Activated CD4-positive, alpha-beta memory T cell treated with anti-CD3 and anti-CD28 coated beads for 36 hours (primary cell): ENCODE measurements at regions of chr7 and their contacts with region 1.

Region 1: GRCh38 chr7:136030862-136031318 is 53.7 kb upstream of the MTPN start:
- DNase-seq: peak; percentile 34
- H3K4me3 Mint-ChIP-seq: no peak overlapping the region
- H3K27ac Mint-ChIP-seq: peak overlapping the region; percentile 87
- H3K4me1 Mint-ChIP-seq: peaks cover 61% of the 10 kb centered on the region
- H3K27me3 Mint-ChIP-seq: no peaks in the 10 kb centered on the region

Region 2: DNA sequence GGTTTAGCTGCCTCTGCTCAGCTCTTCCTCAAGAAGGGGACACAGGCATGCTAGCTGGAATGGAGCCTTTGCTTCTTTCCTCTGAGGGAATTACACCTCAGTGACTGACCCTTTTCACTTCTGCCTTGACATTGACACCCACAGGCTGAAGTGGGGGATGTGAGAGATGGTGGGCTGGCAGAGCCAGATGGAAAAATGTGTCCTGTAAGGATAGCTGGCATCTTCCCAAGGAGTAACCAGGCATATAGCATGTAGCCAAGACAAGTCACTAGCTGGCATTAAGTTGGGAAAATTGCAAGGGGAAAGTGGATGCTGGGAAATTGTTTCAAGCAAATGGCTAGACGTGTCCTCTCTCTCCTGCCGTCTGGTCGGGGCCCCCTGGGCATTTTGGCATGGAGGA is 348.7 kb before region 1 on chr7:
- CTCF ChIA-PET with region 1: no interaction called
- POLR2A ChIA-PET with region 1: no interaction called
- intact Hi-C with region 1: loop called (anchors 2 kb)
- DNase-seq: no peak
- H3K4me3 Mint-ChIP-seq: no peak overlapping the region
- H3K27ac Mint-ChIP-seq: no peak overlapping the region
- H3K4me1 Mint-ChIP-seq: peaks cover 8% of the 10 kb centered on the region
- H3K27me3 Mint-ChIP-seq: no peaks in the 10 kb centered on the region

Region 3: DNA sequence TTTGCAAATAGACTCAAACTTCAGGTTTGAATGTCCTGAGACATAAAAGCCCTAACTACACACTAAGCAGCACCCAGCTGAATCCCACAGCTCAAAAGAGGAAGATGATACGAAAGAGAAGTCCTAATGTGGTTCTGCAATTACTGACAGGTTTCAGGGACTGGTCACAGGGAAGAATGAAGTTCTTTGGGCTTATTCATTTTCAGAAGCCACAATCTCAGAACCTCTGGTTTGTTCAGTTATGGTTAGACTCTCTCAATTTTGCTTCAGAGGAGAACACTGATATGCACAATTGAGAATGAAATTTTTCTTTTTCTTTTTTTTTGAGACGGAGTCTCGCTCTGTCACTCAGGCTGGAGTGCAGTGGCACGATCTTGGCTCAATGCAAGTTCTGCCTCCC is 187.7 kb before region 1 on chr7:
- CTCF ChIA-PET with region 1: no interaction called
- POLR2A ChIA-PET with region 1: no interaction called
- intact Hi-C with region 1: loop called (anchors 1 kb)
- DNase-seq: peak; percentile 17
- H3K4me3 Mint-ChIP-seq: no peak overlapping the region
- H3K27ac Mint-ChIP-seq: no peak overlapping the region
- H3K4me1 Mint-ChIP-seq: peaks cover 9% of the 10 kb centered on the region
- H3K27me3 Mint-ChIP-seq: peaks cover 3% of the 10 kb centered on the region

Region 4: GRCh38 chr7:135993950-135994349 is 36.9 kb before region 1 on chr7:
- CTCF ChIA-PET with region 1: no interaction called
- POLR2A ChIA-PET with region 1: interaction called, 3 read pairs
- intact Hi-C with region 1: loop called (anchors 1 kb)
- DNase-seq: no peak
- H3K4me3 Mint-ChIP-seq: no peak overlapping the region
- H3K27ac Mint-ChIP-seq: peak overlapping the region; percentile 54
- H3K4me1 Mint-ChIP-seq: peaks cover 25% of the 10 kb centered on the region
- H3K27me3 Mint-ChIP-seq: no peaks in the 10 kb centered on the region

Region 5: GRCh38 chr7:136016649-136017395 is 14.1 kb before region 1 on chr7:
- CTCF ChIA-PET with region 1: no interaction called
- POLR2A ChIA-PET with region 1: interaction called, 4 read pairs
- intact Hi-C with region 1: loop called (anchors 1 kb)
- DNase-seq: no peak
- H3K4me3 Mint-ChIP-seq: no peak overlapping the region
- H3K27ac Mint-ChIP-seq: no peak overlapping the region
- H3K4me1 Mint-ChIP-seq: peaks cover 22% of the 10 kb centered on the region
- H3K27me3 Mint-ChIP-seq: peaks cover 10% of the 10 kb centered on the region

Region 6: DNA sequence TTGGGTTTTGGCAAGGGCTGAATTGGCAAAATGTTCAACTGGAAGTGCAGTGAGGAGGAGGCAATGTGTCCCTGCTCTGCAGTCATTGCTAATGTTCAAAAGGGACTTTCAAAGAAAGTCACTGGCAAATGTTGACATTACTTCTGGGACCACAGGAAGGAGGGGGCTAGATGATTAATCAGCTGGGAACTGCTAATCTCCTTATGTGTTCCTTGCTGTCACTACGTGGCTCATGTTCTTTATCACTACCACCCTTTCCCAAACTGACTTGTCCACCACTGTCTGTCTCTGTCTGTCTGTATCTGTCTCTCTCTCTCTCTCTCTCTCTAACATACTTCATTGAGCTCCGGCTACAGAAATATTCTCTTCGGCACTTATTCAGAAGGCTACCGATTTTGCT is 33.2 kb after region 1 on chr7:
- CTCF ChIA-PET with region 1: interaction called, 3 read pairs
- POLR2A ChIA-PET with region 1: interaction called, 14 read pairs
- intact Hi-C with region 1: loop called (anchors 1 kb)
- DNase-seq: peak; percentile 41
- H3K4me3 Mint-ChIP-seq: no peak overlapping the region
- H3K27ac Mint-ChIP-seq: peak overlapping the region; percentile 77
- H3K4me1 Mint-ChIP-seq: peaks cover 29% of the 10 kb centered on the region
- H3K27me3 Mint-ChIP-seq: no peaks in the 10 kb centered on the region

Region 7: DNA sequence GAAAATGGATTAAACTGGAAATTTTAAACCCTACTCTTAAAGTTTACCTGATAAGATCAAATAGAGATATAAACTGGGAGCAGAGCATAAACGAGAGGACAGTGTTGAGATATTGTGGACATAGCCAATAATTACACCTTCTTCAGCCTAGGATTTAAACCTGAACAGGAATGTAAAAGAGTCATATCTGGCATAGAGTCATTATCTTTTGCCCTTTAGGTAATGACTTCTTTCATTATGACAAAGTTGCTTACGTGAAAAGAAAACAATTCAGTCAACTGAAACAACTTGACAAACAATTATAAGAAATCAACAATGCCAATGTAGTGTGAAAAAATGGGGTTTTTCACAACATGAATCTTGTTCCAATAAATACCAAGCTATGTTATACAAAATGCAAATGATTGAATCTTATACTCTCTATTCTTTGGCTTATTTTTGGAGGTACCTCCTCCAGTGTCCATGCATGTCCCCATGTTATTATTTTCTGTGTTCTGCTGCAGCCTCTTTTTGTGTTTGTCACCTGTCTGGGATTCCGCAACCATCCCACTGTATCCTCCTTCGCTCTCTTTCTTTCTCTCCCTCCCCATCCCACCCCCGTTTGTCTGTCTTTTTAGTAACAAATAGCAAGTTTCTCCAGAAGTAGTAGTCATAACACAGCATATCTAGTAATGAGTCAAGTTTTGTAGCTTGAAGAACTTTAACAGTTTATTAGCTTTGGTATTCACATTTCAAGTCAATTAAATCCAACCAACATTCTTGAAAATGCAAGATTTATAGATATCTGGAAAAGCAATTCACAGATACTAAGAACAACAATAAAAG is 100.1 kb after region 1 on chr7:
- CTCF ChIA-PET with region 1: no interaction called
- POLR2A ChIA-PET with region 1: no interaction called
- intact Hi-C with region 1: loop called (anchors 1 kb)
- DNase-seq: no peak
- H3K4me3 Mint-ChIP-seq: no peak overlapping the region
- H3K27ac Mint-ChIP-seq: peak overlapping the region; percentile 44
- H3K4me1 Mint-ChIP-seq: peaks cover 14% of the 10 kb centered on the region
- H3K27me3 Mint-ChIP-seq: no peaks in the 10 kb centered on the region